HAP-1 (cell line): ENCODE measurements at regions of chr15 and their contacts with region 1.

Region 1: GRCh38 chr15:44738340-44738984 is 2.1 kb downstream of the TRIM69 start:
- DNase-seq: peak in 1 of 2 experiments; percentile 49
- H3K4me3 ChIP-seq: no peak overlapping the region
- H3K4me1 ChIP-seq: no peaks in the 10 kb centered on the region
- H3K27me3 ChIP-seq: no peaks in the 10 kb centered on the region

Region 2: GRCh38 chr15:44381236-44381635 is 357.2 kb before region 1 on chr15:
- in situ Hi-C with region 1: no loop called
- DNase-seq: no peak
- H3K4me3 ChIP-seq: no peak overlapping the region
- H3K4me1 ChIP-seq: no peaks in the 10 kb centered on the region
- H3K27me3 ChIP-seq: no peaks in the 10 kb centered on the region

Region 3: DNA sequence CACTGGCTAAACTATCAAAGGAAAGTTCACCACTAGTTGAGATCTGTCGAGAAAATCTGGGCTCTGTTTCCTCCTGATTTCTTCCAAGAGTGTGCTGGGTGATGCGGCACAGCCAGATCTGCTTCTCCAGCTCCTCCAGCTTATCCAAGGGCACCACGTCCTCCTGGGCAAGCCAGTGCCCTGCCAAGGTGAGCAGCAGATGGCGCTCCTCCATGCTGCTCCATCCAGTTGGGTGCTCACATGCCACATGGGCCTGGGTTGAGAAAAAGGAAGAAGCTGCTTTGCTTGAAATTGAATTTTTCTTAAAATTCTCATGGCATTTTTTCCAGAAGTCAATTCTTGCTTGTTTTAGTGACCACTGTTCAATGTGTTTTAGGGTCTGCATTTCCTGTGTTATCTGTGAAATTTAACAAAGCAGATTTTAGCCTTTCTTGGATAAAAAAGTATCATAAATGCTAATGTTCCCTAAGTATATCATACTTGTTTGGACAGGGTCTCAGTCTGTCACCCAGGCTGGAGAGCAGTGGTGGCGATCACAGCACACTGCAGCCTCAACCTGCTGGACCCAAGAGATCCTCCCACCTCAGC is 154.2 kb before region 1 on chr15:
- in situ Hi-C with region 1: loop called (anchors 10 kb)
- DNase-seq: peak in 1 of 2 experiments; percentile 44
- H3K4me3 ChIP-seq: no peak overlapping the region
- H3K4me1 ChIP-seq: no peaks in the 10 kb centered on the region
- H3K27me3 ChIP-seq: no peaks in the 10 kb centered on the region